ENCODE measurements at regions of chrX and their contacts with region 1.

Region 1: GRCh38 chrX:131841496-131842410 is 181.3 kb upstream of the STK26 start:
- DNase-seq: no peak
- H3K4me3 ChIP-seq: no peak overlapping the region
- H3K27ac ChIP-seq: no peak overlapping the region
- H3K4me1 ChIP-seq: peaks cover 0 to 8% (median 0%) of the 10 kb centered on the region in 6 donors
- H3K27me3 ChIP-seq: peaks cover 0 to 38% (median 3%) of the 10 kb centered on the region in 7 donors
- CTCF ChIP-seq: peak; percentile 57 to 90 (median 75)
- POLR2A ChIP-seq: no peak

Region 2: DNA sequence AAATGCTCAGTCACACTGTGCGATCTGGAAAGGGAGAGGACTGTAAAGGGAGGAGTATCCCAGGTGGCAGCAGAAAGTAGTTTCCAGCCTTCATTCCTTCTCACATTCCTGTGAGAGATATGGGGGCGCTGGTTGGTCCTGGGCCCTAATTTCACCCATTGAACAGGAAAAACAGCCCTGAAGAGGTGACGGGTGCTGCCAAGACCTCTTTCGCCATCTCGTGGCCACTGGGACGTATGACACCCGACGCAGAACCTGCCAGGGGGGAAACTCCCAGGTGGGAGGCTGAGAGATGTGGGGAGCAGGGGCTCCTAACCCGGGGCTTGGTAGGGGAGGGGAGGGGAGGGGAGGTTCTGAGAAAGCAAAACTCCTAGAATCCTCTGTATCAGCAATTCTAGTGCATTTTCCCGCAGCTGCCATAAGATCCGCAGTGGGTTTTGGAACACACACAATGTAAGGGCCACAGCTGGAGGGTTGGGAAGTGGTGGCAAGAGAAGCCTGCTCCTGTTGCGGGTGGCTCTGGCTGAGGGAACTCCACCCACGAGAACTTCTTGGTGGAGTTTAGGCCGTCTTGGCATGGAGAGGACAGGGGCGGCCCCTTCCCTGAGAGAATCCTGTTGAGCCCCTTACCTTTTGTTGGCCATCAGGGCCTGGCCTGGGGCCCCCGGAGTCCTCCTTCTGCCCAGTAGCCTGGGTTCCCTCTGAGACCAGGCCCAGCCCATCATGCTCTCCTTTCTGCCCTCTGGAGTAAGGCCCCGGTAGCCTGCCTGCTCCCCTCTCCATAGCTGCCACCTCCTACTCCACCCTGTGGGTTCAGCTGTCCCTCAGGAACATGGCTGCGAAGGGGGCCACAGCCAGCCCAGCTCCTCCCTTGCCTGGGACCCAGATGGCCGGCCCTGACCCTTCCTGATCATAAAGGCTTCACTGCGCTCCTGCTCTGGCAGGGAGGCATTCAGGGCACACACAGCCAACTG is 163.8 kb before region 1 on chrX:
- intact Hi-C with region 1: loop called (anchors 5 kb)
- DNase-seq: peak; percentile 79
- H3K4me3 ChIP-seq: no peak overlapping the region
- H3K27ac ChIP-seq: no peak overlapping the region
- H3K4me1 ChIP-seq: no peaks in the 10 kb centered on the region
- H3K27me3 ChIP-seq: peaks cover 0 to 11% (median 0%) of the 10 kb centered on the region in 7 donors
- CTCF ChIP-seq: peak in 9 of 11 experiments; percentile 16 to 75 (median 48)
- POLR2A ChIP-seq: no peak

Region 3: GRCh38 chrX:132004708-132005107 is 163.0 kb after region 1 on chrX:
- intact Hi-C with region 1: no loop called
- DNase-seq: no peak
- H3K4me3 ChIP-seq: no peak overlapping the region
- H3K27ac ChIP-seq: no peak overlapping the region
- H3K4me1 ChIP-seq: no peaks in the 10 kb centered on the region
- H3K27me3 ChIP-seq: peaks cover 0 to 21% (median 0%) of the 10 kb centered on the region in 7 donors
- CTCF ChIP-seq: no peak
- POLR2A ChIP-seq: no peak

Region 4: GRCh38 chrX:132059973-132060540 is 218.3 kb after region 1 on chrX:
- intact Hi-C with region 1: loop called (anchors 10 kb)
- DNase-seq: no peak
- H3K4me3 ChIP-seq: no peak overlapping the region
- H3K27ac ChIP-seq: no peak overlapping the region
- H3K4me1 ChIP-seq: no peaks in the 10 kb centered on the region
- H3K27me3 ChIP-seq: peaks cover 0 to 3% (median 0%) of the 10 kb centered on the region in 7 donors
- CTCF ChIP-seq: no peak
- POLR2A ChIP-seq: no peak

Region 5: DNA sequence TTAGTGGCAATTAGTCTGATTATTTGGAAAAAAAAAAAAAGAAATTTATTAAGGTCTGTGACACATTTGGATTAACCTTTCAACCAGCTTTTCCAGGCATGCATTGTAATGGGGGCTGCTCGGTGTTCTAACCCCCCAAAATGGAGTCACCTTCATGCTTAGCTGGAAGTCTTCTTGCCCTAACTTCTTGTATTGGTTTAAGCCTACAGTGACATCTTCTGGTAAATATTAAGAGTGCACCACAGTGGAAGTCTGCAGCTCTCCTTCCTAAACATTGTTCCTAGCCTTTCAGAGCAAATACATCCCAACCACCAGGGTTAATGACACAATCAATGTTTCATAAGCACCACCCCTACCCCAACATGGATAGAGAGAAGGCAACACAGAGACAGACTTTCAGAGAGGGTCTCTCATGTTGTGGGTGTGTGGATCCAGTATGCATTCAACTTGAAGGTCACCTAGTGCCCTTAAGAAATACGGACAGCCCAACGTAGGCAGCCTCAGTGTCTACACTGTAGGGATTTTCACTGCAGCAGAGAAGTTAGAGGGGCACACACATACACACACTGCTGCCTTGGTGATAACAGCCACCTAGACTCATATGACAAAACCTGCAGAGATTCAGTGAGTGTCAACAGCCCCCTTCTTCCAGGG is 790.0 kb after region 1 on chrX:
- intact Hi-C with region 1: loop called (anchors 10 kb)
- DNase-seq: no peak
- H3K4me3 ChIP-seq: no peak overlapping the region
- H3K27ac ChIP-seq: no peak overlapping the region
- H3K4me1 ChIP-seq: no peaks in the 10 kb centered on the region
- H3K27me3 ChIP-seq: peaks cover 0 to 25% (median 0%) of the 10 kb centered on the region in 7 donors
- CTCF ChIP-seq: peak; percentile 29 to 63 (median 45)
- POLR2A ChIP-seq: no peak